ENCODE measurements at regions of chr21 and their contacts with region 1.

Region 1: DNA sequence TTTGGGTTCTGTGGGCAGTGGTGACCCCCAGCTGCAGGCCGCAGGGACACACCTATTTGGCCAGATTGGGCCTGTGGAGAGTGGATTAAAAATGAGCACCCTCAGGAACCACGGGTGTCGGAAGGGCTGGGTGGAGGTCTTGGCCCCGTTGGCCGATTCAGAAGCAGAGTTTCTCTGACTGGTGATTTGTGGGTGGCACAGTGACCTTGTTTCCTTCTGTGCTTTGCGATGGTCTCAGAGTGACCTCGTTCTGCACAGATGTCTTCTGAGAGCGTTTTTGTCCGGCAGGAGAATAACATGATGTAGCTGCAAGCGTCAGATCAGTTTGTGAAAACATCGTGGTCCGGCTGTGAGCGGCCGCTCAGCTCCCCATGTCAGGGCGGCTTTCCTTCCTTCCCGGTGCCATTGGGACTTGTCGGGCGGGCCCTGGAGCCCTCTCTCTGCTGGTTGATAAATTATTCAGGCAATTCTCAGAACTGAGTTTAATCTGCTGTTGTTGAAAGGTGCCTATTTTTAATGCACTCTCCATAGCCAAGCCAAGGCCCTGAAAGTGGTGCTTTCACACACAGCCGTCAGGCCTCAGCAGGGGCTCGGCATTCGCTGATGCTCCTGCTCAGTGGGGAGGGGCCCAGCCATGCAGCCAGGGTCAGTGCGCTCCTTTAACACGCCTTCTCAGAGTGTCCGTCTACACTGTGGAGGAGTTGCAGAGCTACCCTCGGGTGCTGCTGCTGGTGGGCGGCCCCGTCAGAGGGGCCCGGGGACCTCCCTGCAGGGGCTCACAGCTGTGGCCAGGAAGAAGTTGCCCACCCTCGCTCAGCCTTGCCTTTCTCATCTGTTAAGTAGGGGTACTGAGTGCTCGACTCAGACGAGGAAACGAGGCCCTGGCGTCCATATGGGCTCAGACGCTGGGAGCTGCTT is 26.8 kb downstream of the TRPM2 start:
- DNase-seq: peak in 1 of 2 donors; percentile 27
- ATAC-seq: no peak
- H3K4me3 ChIP-seq: no peak overlapping the region
- H3K27ac ChIP-seq: no peak overlapping the region
- H3K4me1 ChIP-seq: no peaks in the 10 kb centered on the region
- H3K27me3 ChIP-seq: peaks cover 0 to 45% (median 18%) of the 10 kb centered on the region in 3 donors
- CTCF ChIP-seq: no peak

Region 2: DNA sequence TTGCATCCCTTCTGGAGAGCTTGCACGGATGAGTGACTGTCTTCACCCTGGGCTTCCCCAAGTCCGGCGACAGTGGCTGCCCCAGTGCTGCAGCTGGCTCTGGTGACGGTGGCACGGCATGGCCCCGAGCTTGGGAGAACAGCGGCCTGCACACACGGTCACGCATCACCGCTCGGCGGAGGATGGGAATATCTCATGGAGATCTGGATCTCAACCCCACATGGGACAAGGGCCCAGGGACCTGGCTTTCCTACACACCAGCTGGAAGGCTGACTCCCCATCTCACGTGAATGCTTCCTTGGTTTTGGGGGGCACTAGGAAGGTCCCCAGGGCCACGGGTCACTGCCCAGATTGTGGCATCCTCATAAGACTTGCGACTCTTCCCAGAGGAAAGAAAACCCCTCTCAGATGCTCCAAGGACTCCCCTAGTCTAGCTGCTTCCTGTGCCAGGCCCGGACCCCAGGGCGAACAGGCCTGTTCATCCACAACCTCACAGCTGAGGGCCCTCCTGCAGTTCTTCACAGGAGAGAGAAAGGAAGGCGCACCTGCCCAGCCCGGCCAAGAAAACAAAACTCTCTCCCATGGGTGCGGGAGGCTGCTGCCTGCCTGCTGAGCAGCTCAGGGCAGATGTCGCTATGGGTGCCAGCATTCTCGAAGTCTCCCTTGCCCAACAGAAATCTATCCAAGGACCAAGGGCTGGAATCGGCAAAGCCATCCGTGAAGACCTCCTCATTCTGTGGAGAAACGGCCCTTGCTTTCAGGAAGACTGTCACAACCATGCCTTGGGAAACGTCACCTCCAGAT is 51.0 kb before region 1 on chr21:
- intact Hi-C with region 1: loop called in 1 of 2 experiments (anchors 10 kb)
- DNase-seq: no peak
- ATAC-seq: no peak
- H3K4me3 ChIP-seq: no peak overlapping the region
- H3K27ac ChIP-seq: no peak overlapping the region
- H3K4me1 ChIP-seq: no peaks in the 10 kb centered on the region
- H3K27me3 ChIP-seq: no peaks in the 10 kb centered on the region
- CTCF ChIP-seq: no peak